Thyroid gland (tissue), 4 donors: ENCODE measurements at regions of chr4 and their contacts with region 1.

Region 1: DNA sequence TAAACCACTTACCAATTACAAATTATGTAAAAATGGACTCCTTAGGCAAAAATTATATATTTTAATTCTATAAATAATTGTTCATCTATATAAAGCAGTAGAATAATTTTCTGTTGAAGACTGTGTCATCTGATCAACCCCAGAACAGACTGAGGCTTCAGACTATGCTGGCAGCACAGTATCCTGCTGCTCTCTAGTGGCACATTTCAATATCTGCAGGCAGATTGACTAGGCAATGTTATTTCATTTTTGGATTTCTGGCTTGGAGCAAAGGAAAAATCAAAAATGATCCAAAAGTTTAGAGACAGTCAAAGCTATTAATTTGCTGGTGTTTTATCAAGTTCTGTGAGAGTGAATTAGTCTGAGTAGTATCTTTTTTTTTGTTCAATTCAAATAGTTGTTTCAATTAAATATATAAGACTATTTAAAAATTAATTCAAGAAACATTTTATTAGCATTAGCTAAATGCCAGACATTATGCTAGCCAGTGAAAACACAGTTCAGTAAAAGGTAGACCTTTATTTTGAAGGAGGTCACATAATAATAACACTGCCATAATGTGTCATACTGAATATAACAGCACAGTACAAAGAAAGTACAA is 21.3 kb upstream of the SULT1E1 start:
- DNase-seq: peak; percentile 19 to 22
- H3K4me3 ChIP-seq: no peak overlapping the region
- H3K27ac ChIP-seq: no peak overlapping the region
- H3K4me1 ChIP-seq: no peaks in the 10 kb centered on the region
- H3K27me3 ChIP-seq: no peaks in the 10 kb centered on the region
- CTCF ChIP-seq: peak in 5 of 6 experiments; percentile 36 to 85 (median 74)
- POLR2A ChIP-seq: no peak

Region 2: DNA sequence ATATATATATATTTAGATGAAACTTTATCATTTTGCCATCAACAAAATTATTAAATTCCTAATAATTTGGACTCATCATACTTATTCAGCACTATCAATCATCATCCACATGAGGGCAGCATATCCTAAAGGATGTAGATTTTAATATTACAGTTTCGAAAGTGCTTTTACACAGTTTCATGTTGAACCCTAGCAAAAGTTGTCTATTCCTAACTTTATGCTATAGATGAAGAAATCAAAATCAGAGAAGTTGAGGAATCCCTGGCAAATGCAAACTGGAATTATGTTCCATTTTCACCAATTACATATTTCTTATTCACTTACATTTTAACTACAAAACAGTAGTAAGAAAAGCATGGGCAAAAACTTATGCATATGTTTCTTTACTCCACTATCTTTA is 191.7 kb before region 1 on chr4:
- intact Hi-C with region 1: loop called (anchors 5 kb)
- DNase-seq: no peak
- H3K4me3 ChIP-seq: no peak overlapping the region
- H3K27ac ChIP-seq: no peak overlapping the region
- H3K4me1 ChIP-seq: no peaks in the 10 kb centered on the region
- H3K27me3 ChIP-seq: no peaks in the 10 kb centered on the region
- CTCF ChIP-seq: peak in 4 of 6 experiments; percentile 27 to 73 (median 58)
- POLR2A ChIP-seq: no peak